ENCODE measurements at regions of chr10 and their contacts with region 1.

Region 1: DNA sequence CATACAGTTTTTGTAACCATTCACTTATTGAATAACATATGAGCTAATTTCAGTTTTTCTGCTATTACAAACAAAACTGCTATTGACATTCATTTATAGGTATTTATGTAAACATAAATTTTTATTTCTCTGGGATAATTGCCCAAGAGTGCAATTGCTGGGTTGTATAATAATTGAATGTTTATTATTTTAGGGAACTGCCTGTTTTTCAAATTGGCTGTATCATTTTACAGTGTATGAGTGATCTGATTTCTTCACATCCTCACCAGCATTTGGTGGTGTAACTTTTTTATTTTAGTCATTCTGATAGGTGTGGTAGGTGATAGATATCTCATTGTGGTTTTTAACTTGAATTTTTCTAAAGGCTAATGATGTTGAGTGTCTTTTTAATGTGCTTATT is 26.4 kb downstream of the KIF11 start:
- DNase-seq: no peak
- H3K4me3 ChIP-seq: no peak overlapping the region
- H3K27ac ChIP-seq: no peak overlapping the region
- H3K4me1 ChIP-seq: no peaks in the 10 kb centered on the region
- H3K27me3 ChIP-seq: no peaks in the 10 kb centered on the region
- CTCF ChIP-seq: no peak
- EP300 ChIP-seq: no peak
- POLR2A ChIP-seq: no peak

Region 2: GRCh38 chr10:92208736-92209327 is 410.5 kb before region 1 on chr10:
- intact Hi-C with region 1: no loop called
- DNase-seq: no peak
- H3K4me3 ChIP-seq: no peak overlapping the region
- H3K27ac ChIP-seq: peak overlapping the region in 2 of 4 donors; percentile 13 to 69
- H3K4me1 ChIP-seq: peaks cover 0 to 28% (median 15%) of the 10 kb centered on the region in 4 donors
- H3K27me3 ChIP-seq: no peaks in the 10 kb centered on the region
- CTCF ChIP-seq: no peak
- EP300 ChIP-seq: no peak
- POLR2A ChIP-seq: no peak

Region 3: DNA sequence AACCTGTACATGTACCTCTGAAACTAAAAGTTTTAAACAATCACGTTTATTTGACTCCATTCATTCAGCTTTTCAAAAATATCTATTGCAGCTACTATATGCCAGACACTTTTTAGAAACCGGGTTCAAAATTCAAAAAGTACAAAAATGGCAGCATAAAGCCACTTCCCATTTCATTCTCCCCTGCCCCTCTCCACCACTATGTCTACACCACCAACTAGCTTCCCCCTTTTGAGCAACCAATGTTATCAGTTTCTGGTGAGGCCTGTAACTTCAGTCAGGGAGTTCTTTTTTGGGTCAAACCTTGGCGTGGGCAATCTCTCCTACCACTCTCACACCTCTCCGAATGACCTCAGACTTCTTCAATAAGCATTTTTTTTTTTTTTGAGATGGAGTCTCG is 58.8 kb after region 1 on chr10:
- intact Hi-C with region 1: loop called (anchors 2 kb)
- DNase-seq: no peak
- H3K4me3 ChIP-seq: no peak overlapping the region
- H3K27ac ChIP-seq: no peak overlapping the region
- H3K4me1 ChIP-seq: no peaks in the 10 kb centered on the region
- H3K27me3 ChIP-seq: no peaks in the 10 kb centered on the region
- CTCF ChIP-seq: no peak
- EP300 ChIP-seq: no peak
- POLR2A ChIP-seq: no peak

Region 4: DNA sequence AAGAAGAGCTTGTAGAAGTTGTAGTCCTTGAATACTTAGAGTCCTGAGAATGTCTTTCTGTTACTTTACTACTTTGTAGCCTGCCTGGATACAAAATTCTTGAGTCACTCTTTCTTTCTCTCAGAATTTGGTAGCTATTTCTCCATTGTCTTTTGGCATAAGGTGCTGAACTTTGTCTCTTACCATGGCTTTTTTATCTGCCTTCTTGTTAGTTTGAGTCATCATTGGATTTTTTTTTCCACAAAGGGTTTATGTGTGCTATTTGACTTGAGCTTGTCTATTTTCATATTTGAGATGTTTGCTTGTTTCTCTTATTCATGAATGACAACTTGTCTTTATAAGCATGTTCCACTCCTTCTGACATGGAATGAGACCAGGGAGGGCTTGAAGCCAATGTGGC is 154.4 kb after region 1 on chr10:
- intact Hi-C with region 1: no loop called
- DNase-seq: no peak
- H3K4me3 ChIP-seq: no peak overlapping the region
- H3K27ac ChIP-seq: no peak overlapping the region
- H3K4me1 ChIP-seq: no peaks in the 10 kb centered on the region
- H3K27me3 ChIP-seq: no peaks in the 10 kb centered on the region
- CTCF ChIP-seq: no peak
- EP300 ChIP-seq: no peak
- POLR2A ChIP-seq: no peak

Measured in sigmoid colon (tissue), 7 donors.